Panc1 (cell line): ENCODE measurements at regions of chr12 and their contacts with region 1.

Region 1: GRCh38 chr12:6944381-6945186 is 762 bp downstream of the C12orf57 start:
- DNase-seq: peak; percentile 75
- ATAC-seq: peak; percentile 55
- H3K4me3 ChIP-seq: peak overlapping the region; percentile 64 to 72
- H3K27ac ChIP-seq: peak overlapping the region; percentile 95
- H3K4me1 ChIP-seq: peaks cover 41% of the 10 kb centered on the region
- H3K27me3 ChIP-seq: no peaks in the 10 kb centered on the region
- CTCF ChIP-seq: peak; percentile 87

Region 2: DNA sequence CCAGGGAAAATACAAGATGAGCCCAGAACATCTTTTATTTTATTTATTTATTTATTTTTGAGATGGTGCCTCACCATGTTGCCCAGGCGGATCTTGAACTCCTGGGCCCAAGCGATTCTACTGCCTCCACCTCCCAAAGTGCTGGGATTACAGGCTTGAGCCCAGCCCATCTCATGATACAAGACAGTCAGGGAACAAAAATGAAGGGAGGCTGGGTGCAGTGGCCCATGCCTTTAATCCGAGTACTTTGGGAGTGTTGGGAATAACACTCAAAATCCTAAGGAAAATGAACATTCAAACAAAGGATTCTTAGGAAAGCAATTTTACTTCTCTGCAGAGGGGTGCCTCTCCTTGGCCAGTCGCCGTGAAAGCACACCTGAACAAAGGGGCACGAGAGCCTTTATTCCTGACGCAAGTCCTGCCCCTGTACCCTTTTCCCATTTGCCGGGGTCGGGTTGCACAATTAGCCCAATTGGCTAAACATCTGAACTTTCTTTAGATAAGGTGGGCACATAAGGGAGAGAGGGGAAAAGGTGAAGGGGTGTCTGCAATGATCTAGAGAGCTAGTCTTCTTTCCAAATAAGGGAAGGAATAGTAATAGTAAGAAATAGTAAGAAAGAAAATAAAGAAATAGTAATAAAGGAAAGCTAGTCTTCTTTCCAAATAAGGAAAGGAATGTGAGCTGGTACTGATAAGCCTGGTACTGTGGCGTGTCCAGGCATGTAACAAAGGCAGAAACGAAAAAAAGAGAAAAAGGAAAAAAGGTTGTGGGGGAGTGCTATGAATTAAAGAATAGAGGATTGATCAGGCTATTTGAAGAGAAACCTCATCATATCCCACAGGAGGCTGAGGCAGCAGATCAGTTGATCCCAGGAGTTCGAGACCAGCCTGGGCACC is 437.2 kb before region 1 on chr12:
- CTCF ChIA-PET with region 1: no interaction called
- POLR2A ChIA-PET with region 1: no interaction called
- in situ Hi-C with region 1: no loop called
- intact Hi-C with region 1: no loop called
- DNase-seq: no peak
- ATAC-seq: no peak
- H3K4me3 ChIP-seq: no peak overlapping the region
- H3K27ac ChIP-seq: no peak overlapping the region
- H3K4me1 ChIP-seq: no peaks in the 10 kb centered on the region
- H3K27me3 ChIP-seq: no peaks in the 10 kb centered on the region
- CTCF ChIP-seq: no peak

Region 3: GRCh38 chr12:7113389-7113871 is 168.8 kb after region 1 on chr12:
- CTCF ChIA-PET with region 1: no interaction called
- POLR2A ChIA-PET with region 1: interaction called, 7 read pairs
- in situ Hi-C with region 1: no loop called
- intact Hi-C with region 1: loop called (anchors 10 kb)
- DNase-seq: no peak
- ATAC-seq: no peak
- H3K4me3 ChIP-seq: no peak overlapping the region
- H3K27ac ChIP-seq: no peak overlapping the region
- H3K4me1 ChIP-seq: peaks cover 3% of the 10 kb centered on the region; the same call in 1 of the 2 replicates
- H3K27me3 ChIP-seq: no peaks in the 10 kb centered on the region
- CTCF ChIP-seq: peak; percentile 85